ENCODE measurements at regions of chr3 and their contacts with region 1.

Region 1: DNA sequence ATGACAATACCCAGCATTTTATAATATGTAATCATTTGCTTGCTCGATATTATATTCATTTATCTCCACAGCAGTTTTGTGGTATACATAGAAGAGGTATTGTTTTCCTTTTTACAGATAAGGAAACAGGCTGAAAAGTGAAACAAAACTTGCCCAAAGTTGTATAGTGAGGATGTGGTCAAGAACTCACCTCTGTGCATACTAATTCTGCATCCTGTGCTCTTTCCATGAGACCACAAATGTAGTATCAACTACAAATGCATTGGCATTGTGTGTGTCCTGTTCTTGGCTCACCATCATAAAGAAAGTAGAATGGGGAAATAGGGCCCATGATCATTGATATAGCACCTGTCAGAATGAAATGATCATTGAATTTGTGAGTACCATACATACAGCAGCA is 167.3 kb downstream of the NECTIN3 start:
- DNase-seq: peak; percentile 85
- H3K4me3 Mint-ChIP-seq: peak overlapping the region; percentile 34
- H3K27ac Mint-ChIP-seq: peak overlapping the region; percentile 52
- H3K4me1 Mint-ChIP-seq: peaks cover 37% of the 10 kb centered on the region
- H3K27me3 Mint-ChIP-seq: no peaks in the 10 kb centered on the region

Region 2: DNA sequence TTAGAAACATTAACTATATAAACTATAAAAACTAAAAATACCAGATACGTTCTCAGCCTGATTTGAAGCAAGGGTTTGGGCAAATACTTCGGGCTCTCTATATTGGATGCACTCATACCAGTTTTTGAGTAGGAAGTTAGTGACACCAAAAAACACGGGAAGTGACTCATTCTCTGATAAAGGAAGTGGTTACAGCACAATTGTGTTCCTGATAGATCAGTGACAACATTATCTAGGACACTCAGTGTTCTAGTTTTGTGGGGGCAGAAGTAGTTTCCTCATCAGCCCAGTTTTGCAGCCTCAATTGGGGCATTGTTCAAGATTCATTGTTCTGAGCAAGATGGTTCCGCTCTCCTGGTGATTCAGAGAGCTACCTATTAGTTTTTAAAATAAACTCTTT is 1432.0 kb before region 1 on chr3:
- intact Hi-C with region 1: loop called (anchors 10 kb)
- DNase-seq: peak; percentile 84
- H3K4me3 Mint-ChIP-seq: peak overlapping the region; percentile 54
- H3K27ac Mint-ChIP-seq: peak overlapping the region; percentile 57
- H3K4me1 Mint-ChIP-seq: peaks cover 31% of the 10 kb centered on the region
- H3K27me3 Mint-ChIP-seq: peaks cover 7% of the 10 kb centered on the region

Region 3: GRCh38 chr3:111071257-111072015 is 167.4 kb before region 1 on chr3 and contains the start of gene NECTIN3:
- intact Hi-C with region 1: loop called (anchors 2 kb)
- DNase-seq: peak; percentile 94
- H3K4me3 Mint-ChIP-seq: peak within 1 kb of the TSS; percentile 94
- H3K27ac Mint-ChIP-seq: peak within 1 kb of the TSS; percentile 87
- H3K4me1 Mint-ChIP-seq: peaks cover 30% of the 10 kb centered on the region
- H3K27me3 Mint-ChIP-seq: peaks cover 55% of the 10 kb centered on the region
- total RNA-seq, gene NECTIN3: 3.0 and 4.4 TPM in 2 replicates

Region 4: DNA sequence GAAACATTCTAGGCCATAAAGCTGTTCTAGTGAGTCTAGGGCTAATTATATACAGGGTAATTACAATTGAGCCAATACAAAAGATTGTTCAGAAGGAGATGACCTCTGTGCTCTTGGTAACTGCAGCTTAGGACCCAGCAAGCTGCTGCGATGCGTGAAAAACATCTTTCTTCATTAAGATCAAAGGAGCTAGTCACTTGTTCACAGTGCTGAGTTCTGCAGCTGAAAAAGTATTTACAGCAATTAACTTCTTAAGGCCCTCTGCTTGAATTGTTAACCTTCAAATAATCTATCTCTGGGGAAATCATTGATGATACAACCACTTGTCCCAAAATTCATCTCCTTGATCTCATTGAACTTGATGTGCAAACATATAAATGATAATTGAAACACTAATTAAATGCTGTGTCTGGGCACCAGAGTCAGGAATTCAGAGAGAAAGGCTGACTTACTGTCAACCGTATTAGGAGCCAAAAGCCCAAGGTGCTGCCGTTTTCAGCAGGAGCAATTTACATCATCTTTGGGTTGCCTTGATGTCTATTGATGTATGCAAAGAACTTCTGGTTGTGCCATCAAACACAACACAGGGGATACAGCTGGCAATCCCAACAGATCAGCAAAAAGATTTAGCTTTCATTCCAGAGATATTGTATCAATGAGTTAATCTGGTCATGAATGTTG is 45.8 kb after region 1 on chr3:
- intact Hi-C with region 1: loop called (anchors 5 kb)
- DNase-seq: no peak
- H3K4me3 Mint-ChIP-seq: no peak overlapping the region
- H3K27ac Mint-ChIP-seq: no peak overlapping the region
- H3K4me1 Mint-ChIP-seq: peaks cover 38% of the 10 kb centered on the region
- H3K27me3 Mint-ChIP-seq: peaks cover 2% of the 10 kb centered on the region

Region 5: GRCh38 chr3:111338059-111338698 is 99.3 kb after region 1 on chr3:
- intact Hi-C with region 1: loop called (anchors 2 kb)
- DNase-seq: peak; percentile 84
- H3K4me3 Mint-ChIP-seq: no peak overlapping the region
- H3K27ac Mint-ChIP-seq: no peak overlapping the region
- H3K4me1 Mint-ChIP-seq: peaks cover 24% of the 10 kb centered on the region
- H3K27me3 Mint-ChIP-seq: peaks cover 2% of the 10 kb centered on the region

Region 6: DNA sequence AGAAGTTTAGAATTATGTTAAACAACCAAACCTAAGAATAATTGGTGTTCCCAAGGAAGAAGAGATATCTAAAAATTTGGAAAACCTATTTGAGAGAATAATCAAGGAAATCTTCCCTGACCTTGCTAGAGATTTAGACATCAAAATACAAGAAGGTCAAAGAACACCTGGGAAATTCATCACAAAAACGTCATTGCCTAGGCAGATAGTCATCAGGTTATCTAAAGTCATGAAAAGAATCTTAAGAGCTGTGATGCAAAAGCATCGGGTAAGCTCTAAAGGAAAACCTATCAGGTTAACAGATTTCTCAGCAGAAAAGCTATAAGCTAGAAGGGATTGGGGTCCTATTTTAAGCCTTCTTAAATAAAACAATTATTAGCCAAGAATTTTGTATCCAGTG is 169.1 kb after region 1 on chr3:
- intact Hi-C with region 1: no loop called
- DNase-seq: no peak
- H3K4me3 Mint-ChIP-seq: no peak overlapping the region
- H3K27ac Mint-ChIP-seq: no peak overlapping the region
- H3K4me1 Mint-ChIP-seq: no peaks in the 10 kb centered on the region
- H3K27me3 Mint-ChIP-seq: peaks cover 4% of the 10 kb centered on the region

Measured in activated CD4-positive, alpha-beta T cell treated with anti-CD3 and anti-CD28 coated beads, Interleukin-2, amount 10 ng/mL, durations not matched to agents 24 days and 14 days (primary cell).